Cardiac septum (tissue), 1 donor: ENCODE measurements at regions of chr20 and their contacts with region 1.

Region 1: GRCh38 chr20:49982346-49983122 is at the start of gene SNAI1:
- DNase-seq: peak; percentile 92
- total RNA-seq, gene SNAI1: 4.3 TPM

Region 2: GRCh38 chr20:49865559-49865958 is 117.0 kb before region 1 on chr20:
- intact Hi-C with region 1: no loop called
- DNase-seq: peak; percentile 20

Region 3: DNA sequence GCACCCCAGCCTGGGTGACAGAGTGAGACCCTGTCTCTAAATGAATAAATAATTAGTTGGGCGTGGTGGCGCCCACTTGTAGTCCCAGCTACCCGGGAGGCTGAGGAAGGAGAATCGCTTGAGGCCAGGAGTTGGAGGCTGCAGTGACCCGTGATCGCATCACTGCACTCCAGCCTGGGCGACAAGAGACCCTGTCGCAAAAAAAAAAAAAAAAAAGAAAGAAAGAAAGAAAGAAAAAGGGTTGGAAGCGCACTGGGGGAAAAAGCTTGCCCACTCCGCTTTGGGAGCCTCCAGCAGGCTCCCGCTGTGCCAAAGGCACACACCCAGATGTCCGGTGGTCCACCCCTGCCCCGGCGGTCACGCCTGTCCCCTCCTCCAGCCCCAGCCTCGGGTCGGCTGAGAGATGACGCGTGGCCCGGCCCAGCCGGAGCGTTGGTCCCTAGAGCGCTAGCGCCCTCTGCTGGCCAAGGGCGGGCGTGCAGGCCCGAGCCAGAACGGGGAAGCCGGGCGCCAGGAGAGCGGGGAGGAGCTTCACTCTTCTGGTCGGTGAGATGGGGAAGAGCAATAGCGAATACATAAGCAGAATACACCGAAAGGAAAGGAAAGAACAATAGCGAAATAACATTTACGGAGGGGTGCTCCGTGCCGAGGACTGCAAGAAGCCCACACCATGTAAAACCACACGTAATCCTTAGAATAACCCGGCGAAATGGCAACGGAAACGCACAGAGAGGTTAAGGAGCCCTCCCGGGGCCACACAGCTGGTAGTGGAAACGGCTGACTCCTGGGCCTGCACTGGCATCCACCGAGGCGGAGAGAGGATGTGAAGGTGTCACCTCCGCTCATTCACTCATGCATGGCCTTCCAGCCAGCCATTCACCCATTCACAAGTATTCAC is 88.7 kb after region 1 on chr20:
- intact Hi-C with region 1: loop called (anchors 1 kb)
- DNase-seq: peak; percentile 96

Region 4: DNA sequence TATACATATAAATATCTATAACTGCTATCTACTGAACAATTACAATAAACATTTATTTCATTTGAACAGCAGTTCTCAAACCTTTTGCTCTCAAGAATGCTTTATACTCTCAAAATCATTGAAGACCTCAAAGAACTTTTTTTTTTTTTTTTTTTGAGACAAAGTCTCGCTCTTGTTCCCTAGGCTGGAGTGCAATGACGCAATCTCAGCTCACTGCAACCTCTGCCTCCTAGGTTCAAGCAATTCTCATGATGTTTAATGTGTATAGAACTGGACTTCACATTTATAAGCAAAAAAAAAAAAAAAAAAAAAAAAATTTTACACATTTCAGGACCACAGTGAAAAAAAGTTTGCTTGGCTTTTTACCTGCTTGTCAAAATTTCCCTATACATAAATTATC is 118.7 kb after region 1 on chr20:
- intact Hi-C with region 1: no loop called
- DNase-seq: no peak